ENCODE measurements at regions of chr5 and their contacts with region 1.

Region 1: GRCh38 chr5:88729084-88729828 is 153.7 kb downstream of the MEF2C start:
- DNase-seq: peak; percentile 83
- H3K4me3 ChIP-seq: no peak overlapping the region
- H3K27ac ChIP-seq: no peak overlapping the region
- H3K4me1 ChIP-seq: no peaks in the 10 kb centered on the region
- H3K27me3 ChIP-seq: no peaks in the 10 kb centered on the region
- CTCF ChIP-seq: peak; percentile 83

Region 2: GRCh38 chr5:88792144-88792840 is 63.0 kb after region 1 on chr5:
- CTCF ChIA-PET with region 1: no interaction called
- POLR2A ChIA-PET with region 1: no interaction called
- intact Hi-C with region 1: no loop called
- DNase-seq: no peak
- H3K4me3 ChIP-seq: no peak overlapping the region
- H3K27ac ChIP-seq: no peak overlapping the region
- H3K4me1 ChIP-seq: no peaks in the 10 kb centered on the region
- H3K27me3 ChIP-seq: no peaks in the 10 kb centered on the region
- CTCF ChIP-seq: no peak

Region 3: DNA sequence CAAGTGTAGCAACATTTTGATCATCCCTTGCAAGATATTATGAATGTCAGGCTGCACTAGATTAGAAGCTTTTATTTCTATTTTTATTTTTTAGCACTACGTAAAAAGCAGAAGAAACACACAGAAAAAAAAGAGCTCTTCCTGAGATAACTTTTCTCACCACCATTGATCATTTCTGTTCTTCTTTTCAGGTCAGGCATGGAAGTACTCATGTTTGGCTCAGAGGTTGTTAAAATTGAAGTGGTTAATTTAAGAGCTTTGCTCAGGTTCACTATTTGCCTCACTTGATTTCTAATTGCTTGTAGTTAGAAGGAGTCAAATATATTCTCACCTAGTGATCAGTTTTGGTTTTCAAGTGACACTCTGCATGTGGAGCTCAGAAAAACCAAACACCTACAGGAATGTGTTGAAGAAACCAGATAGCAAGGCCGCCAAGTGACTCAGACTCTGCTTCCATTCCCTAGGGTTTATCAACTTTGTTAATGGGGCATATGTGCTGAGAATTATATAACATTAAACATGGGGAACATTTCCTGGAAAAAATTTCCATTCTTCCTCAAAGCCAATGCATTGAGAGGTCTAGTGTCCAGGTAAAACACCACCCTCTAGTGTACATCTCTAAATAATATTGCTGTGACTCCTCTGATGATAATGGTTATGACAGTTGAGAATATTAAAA is 1000.5 kb after region 1 on chr5:
- CTCF ChIA-PET with region 1: no interaction called
- POLR2A ChIA-PET with region 1: no interaction called
- intact Hi-C with region 1: loop called (anchors 10 kb)
- DNase-seq: peak; percentile 43
- H3K4me3 ChIP-seq: no peak overlapping the region
- H3K27ac ChIP-seq: no peak overlapping the region
- H3K4me1 ChIP-seq: no peaks in the 10 kb centered on the region
- H3K27me3 ChIP-seq: no peaks in the 10 kb centered on the region
- CTCF ChIP-seq: peak; percentile 50

Region 4: DNA sequence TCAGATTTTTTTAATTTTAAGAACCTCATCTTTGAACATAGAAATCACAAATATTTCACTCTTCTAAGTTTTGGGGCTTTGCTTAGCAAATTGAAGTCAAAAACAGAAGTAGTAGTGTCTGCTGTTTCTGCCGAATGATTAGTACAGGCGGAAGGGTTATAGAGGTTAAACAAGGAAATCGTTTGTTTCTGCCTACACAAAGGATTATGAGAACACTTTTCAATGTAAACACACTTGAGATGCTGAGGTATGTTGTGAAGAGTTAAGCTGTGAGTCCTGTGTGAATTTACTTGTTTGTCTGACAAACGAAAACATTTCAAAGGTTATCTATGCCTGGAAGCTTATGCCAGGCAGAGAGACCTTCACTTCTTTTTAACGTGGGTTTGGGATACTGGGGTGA is 1455.5 kb after region 1 on chr5:
- CTCF ChIA-PET with region 1: interaction called, 3 read pairs
- POLR2A ChIA-PET with region 1: no interaction called
- intact Hi-C with region 1: loop called (anchors 5 kb)
- DNase-seq: no peak
- H3K4me3 ChIP-seq: no peak overlapping the region
- H3K27ac ChIP-seq: no peak overlapping the region
- H3K4me1 ChIP-seq: no peaks in the 10 kb centered on the region
- H3K27me3 ChIP-seq: no peaks in the 10 kb centered on the region
- CTCF ChIP-seq: no peak

Region 5: DNA sequence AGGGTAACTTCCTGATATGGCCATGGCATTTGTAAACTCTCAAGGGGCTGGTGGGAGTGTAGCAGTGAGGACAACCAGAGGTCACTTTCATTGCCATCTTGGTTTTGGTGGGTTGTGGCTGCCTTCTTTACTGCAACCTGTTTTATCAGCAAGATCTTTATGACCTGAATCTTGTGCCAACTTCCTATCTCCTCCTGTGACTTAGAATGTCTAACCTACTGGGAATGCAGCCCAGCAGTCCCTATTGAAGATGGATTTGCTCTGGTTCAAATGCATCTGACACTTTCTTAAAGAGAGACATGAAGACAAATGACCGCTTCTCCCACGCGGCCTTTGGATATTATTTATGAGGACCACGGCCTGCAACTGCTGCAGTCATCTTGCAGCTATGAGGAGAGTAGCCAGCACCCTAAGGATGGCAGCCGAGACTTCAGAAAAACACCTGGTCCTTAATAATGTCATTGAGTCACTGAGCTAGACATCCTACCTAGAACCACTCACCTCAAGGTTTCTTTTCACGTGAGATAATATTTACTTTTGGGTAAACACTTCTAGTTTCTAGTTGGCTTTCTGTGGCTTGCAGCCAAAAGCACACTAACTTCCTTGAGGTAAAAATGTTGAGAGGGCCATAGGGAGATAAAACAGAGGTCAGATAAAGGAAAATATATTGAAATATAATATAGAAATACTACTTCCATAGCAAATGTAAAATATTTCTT is 1652.1 kb after region 1 on chr5:
- CTCF ChIA-PET with region 1: no interaction called
- POLR2A ChIA-PET with region 1: no interaction called
- intact Hi-C with region 1: loop called (anchors 2 kb)
- DNase-seq: no peak
- H3K4me3 ChIP-seq: no peak overlapping the region
- H3K27ac ChIP-seq: no peak overlapping the region
- H3K4me1 ChIP-seq: no peaks in the 10 kb centered on the region
- H3K27me3 ChIP-seq: no peaks in the 10 kb centered on the region
- CTCF ChIP-seq: no peak